PC-3 (cell line): ENCODE measurements at regions of chr1 and their contacts with region 1.

Region 1: GRCh38 chr1:227234998-227235405 is 83.3 kb downstream of the CDC42BPA start:
- DNase-seq: peak; percentile 95
- ATAC-seq: peak; percentile 97
- H3K4me3 ChIP-seq: no peak overlapping the region
- H3K27ac ChIP-seq: no peak overlapping the region
- H3K4me1 ChIP-seq: no peaks in the 10 kb centered on the region
- H3K27me3 ChIP-seq: no peaks in the 10 kb centered on the region
- CTCF ChIP-seq: peak; percentile 98

Region 2: GRCh38 chr1:227010645-227011044 is 224.4 kb before region 1 on chr1:
- CTCF ChIA-PET with region 1: no interaction called
- POLR2A ChIA-PET with region 1: no interaction called
- intact Hi-C with region 1: no loop called
- DNase-seq: no peak
- ATAC-seq: no peak
- H3K4me3 ChIP-seq: no peak overlapping the region
- H3K27ac ChIP-seq: no peak overlapping the region
- H3K4me1 ChIP-seq: no peaks in the 10 kb centered on the region
- H3K27me3 ChIP-seq: no peaks in the 10 kb centered on the region
- CTCF ChIP-seq: no peak

Region 3: GRCh38 chr1:227131193-227131592 is 103.8 kb before region 1 on chr1:
- CTCF ChIA-PET with region 1: no interaction called
- POLR2A ChIA-PET with region 1: no interaction called
- intact Hi-C with region 1: loop called (anchors 1 kb)
- DNase-seq: peak; percentile 83
- ATAC-seq: peak; percentile 84
- H3K4me3 ChIP-seq: no peak overlapping the region
- H3K27ac ChIP-seq: no peak overlapping the region
- H3K4me1 ChIP-seq: no peaks in the 10 kb centered on the region
- H3K27me3 ChIP-seq: no peaks in the 10 kb centered on the region
- CTCF ChIP-seq: peak; percentile 97

Region 4: GRCh38 chr1:227170361-227171166 is 64.4 kb before region 1 on chr1:
- CTCF ChIA-PET with region 1: no interaction called
- POLR2A ChIA-PET with region 1: no interaction called
- intact Hi-C with region 1: no loop called
- DNase-seq: no peak
- ATAC-seq: no peak
- H3K4me3 ChIP-seq: no peak overlapping the region
- H3K27ac ChIP-seq: no peak overlapping the region
- H3K4me1 ChIP-seq: peaks cover 13% of the 10 kb centered on the region
- H3K27me3 ChIP-seq: no peaks in the 10 kb centered on the region
- CTCF ChIP-seq: no peak

Region 5: DNA sequence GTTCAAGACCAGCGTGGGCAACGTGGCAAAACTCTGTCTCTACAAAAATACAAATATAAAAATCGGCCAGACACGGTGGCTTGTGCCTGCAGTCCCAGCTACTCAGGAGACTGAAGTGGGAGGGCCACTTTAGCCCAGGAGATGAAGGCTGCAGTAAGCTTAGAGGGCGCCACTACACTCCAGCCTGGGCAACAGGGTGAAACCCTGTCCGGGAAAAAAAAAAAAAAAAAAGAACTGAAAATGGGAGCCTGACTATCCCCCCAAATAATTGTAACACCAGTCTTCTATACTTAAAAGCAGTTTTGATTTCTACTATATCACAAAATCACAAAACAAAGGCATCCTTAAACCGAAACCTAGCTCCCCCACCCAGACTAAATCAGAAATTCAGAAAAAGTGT is 23.0 kb after region 1 on chr1:
- CTCF ChIA-PET with region 1: no interaction called
- POLR2A ChIA-PET with region 1: no interaction called
- intact Hi-C with region 1: no loop called
- DNase-seq: peak; percentile 31
- ATAC-seq: no peak
- H3K4me3 ChIP-seq: no peak overlapping the region
- H3K27ac ChIP-seq: no peak overlapping the region
- H3K4me1 ChIP-seq: no peaks in the 10 kb centered on the region
- H3K27me3 ChIP-seq: no peaks in the 10 kb centered on the region
- CTCF ChIP-seq: peak; percentile 68

Region 6: GRCh38 chr1:227299241-227299627 is 64.2 kb after region 1 on chr1:
- CTCF ChIA-PET with region 1: no interaction called
- POLR2A ChIA-PET with region 1: no interaction called
- intact Hi-C with region 1: no loop called
- DNase-seq: peak; percentile 49
- ATAC-seq: peak; percentile 48; the same call in 1 of the 2 replicates
- H3K4me3 ChIP-seq: peak overlapping the region; percentile 10; the same call in 1 of the 2 replicates
- H3K27ac ChIP-seq: peak overlapping the region; percentile 10; the same call in 1 of the 2 replicates
- H3K4me1 ChIP-seq: peaks cover 22% of the 10 kb centered on the region
- H3K27me3 ChIP-seq: no peaks in the 10 kb centered on the region
- CTCF ChIP-seq: no peak